ENCODE measurements at regions of chr12 and their contacts with region 1.

Region 1: DNA sequence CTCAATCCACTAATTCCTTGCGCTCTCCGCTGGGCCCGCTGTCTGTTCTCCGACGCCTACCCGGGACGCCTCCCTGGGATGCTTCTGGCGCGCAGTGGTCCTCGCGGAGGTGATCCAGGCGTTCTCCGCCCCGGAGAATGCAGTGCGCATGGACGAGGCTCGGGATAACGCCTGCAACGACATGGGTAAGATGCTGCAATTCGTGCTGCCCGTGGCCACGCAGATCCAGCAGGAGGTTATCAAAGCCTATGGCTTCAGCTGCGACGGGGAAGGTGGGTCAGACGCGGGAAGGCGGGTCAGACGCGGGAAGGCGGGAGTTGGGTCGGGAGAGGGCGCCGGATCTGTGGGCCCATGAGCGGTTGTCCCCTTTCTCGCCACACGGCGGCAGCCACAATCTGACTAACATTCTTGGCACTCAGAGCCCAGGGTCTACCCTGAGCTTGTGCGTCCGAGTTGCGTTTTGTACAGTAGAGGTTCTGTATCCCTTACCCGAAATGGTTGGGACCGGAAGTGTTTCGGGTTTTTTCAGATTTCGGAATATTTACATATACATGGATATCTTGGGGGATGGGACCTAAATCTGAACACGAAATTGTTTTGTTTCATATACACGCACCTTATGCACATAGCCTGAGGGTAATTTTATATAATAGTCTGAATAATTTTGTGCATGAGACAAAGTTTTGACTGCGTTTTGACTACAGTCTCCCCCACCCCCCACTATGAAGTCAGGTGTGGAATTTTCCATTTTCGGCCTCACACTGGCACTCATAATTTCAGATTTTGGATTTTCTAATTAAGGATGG is 762 bp downstream of the C12orf57 start:
- DNase-seq: peak; percentile 97
- ATAC-seq: peak; percentile 76

Region 2: GRCh38 chr12:7042842-7043241 is 98.3 kb after region 1 on chr12:
- intact Hi-C with region 1: loop called (anchors 5 kb)
- DNase-seq: no peak
- ATAC-seq: peak; percentile 82

Region 3: DNA sequence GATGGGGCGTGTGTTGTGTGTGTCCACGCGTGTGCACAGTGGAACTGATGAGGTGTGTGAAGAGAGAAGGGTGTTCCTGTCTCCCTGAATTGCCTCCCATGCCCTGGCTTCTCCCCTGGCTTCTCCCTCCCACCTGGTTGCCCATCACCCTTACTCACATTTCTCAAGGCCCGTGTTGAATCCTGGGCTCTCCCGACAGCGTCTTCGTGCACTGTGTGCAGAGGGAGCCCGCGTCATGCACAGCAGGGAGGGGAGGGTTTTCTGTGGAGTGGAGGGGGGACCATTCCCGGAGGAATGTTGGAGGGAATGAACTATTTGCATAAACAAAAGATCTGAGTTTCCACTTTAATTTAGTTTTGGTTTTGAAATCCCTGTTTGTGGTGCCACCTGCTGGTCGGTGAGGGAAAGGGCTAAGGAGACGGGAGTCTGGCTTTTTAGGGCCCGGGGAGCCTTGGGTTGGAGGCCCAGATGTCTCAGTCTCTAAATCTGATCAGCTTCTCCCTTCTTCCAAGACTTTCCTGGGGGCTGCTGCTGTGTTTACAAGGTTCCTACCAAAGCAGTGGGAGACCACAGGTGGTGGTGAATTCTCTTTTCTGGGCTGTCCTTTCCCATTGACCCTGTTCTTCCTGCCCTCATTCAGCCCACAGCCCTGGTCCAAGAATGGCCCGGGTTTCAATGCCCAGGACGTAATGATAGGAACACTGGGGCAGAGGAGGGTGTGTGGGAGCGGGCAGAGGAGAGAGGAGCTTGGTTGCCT is 147.8 kb after region 1 on chr12 and contains the start of gene C1R:
- intact Hi-C with region 1: no loop called
- DNase-seq: peak; percentile 83
- ATAC-seq: peak; percentile 83
- total RNA-seq, gene C1R: 165 TPM

Region 4: DNA sequence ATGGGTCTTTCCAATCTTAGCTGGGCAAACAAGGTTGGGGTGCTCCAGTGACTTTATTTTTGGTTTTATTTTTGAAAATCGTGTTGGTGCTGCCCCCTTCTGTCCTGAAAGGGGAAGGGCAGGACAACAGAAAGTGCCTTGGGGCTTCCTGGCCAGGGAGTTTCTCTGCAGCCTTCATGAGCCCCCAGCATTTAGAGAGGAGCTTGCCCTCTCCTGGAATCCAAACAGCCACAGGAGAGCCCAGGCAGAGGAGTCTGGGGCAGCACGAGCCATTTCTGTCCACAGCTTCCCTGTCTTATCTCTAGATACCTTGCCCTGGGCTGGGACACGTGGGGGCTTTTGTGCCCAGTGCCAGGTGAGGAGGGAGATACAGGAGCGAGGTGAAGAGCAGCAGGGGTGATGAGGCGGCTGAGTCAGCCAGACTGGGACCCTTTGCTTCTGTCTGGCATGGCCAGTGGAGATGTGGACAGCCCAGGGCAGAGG is 168.8 kb after region 1 on chr12:
- intact Hi-C with region 1: loop called (anchors 10 kb)
- DNase-seq: no peak
- ATAC-seq: peak; percentile 32

Measured in Right ventricle myocardium superior (tissue), 1 donor.